Thyroid gland (tissue), 4 donors: ENCODE measurements at regions of chr2 and their contacts with region 1.

Region 1: DNA sequence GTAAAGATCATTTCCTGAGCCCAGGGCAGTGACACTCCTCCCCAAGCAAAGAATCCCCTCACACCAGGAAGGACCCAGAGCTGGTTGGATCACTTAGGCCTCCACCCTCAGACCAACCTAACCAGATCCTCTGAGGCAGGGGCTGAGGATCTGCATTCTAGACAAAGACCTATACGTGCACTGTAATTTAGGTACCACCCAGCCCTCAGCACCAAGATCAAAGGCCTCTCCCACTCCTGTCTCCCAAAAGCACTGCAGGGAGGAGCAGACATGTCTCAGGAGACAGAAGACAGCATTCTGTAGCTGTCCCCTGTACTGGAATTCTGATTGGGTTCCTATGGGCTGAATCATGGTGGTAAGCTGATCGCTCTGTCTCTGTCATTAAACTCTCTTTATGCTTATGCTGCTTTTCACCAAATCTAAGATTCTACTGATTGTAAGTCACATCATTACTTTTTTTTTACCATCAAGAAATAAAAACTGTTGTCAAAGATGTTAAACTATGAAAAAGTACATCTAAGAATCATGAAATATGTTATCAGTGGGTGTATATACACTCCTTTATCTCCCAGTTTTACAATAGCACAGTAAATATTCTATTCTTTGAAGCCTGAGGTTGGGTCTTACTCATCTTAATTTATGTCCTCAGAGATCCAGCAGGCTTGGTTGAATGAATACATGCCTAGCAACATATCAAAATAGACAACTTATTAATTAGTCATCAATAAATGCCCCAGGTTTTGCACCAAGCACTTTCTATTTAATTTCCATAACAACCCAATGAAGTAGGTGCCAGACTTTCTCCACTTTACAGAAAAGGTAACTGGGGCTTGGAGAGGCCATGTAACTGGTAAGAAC is 28.3 kb downstream of the MCFD2 start:
- DNase-seq: no peak
- H3K4me3 ChIP-seq: no peak overlapping the region
- H3K27ac ChIP-seq: no peak overlapping the region
- H3K4me1 ChIP-seq: peaks cover 0 to 6% of the 10 kb centered on the region in 2 donors
- H3K27me3 ChIP-seq: no peaks in the 10 kb centered on the region
- CTCF ChIP-seq: no peak
- POLR2A ChIP-seq: no peak

Region 2: DNA sequence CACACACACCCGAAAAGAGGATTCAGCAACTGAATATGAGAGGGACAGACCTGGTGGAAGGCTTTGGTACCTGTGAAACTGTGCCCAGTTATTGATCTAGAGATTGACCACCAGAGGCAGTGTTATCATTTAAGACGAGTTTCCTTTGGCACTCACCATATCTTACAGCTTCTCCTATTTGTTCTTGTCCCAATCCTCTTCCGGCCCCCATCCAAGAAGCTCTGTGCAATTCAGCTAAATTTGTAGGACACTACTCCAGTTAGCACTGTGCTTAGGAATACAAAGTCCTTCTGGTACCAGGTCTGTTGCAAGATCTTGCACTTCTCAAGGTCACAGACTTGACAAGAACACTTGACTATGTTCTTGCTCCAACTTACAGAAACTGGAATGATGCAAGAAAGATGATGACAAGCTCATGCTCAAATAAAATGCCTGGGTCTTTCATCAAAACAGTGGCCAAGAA is 230.2 kb before region 1 on chr2:
- intact Hi-C with region 1: loop called (anchors 5 kb)
- DNase-seq: peak; percentile 54 to 70
- H3K4me3 ChIP-seq: no peak overlapping the region
- H3K27ac ChIP-seq: peak overlapping the region in 2 of 3 donors; percentile 21 to 51
- H3K4me1 ChIP-seq: peaks cover 9 to 12% of the 10 kb centered on the region in 2 donors
- H3K27me3 ChIP-seq: no peaks in the 10 kb centered on the region
- CTCF ChIP-seq: peak in 4 of 6 experiments; percentile 35 to 59 (median 48)
- POLR2A ChIP-seq: no peak